ENCODE measurements at regions of chr5 and their contacts with region 1.

Region 1: DNA sequence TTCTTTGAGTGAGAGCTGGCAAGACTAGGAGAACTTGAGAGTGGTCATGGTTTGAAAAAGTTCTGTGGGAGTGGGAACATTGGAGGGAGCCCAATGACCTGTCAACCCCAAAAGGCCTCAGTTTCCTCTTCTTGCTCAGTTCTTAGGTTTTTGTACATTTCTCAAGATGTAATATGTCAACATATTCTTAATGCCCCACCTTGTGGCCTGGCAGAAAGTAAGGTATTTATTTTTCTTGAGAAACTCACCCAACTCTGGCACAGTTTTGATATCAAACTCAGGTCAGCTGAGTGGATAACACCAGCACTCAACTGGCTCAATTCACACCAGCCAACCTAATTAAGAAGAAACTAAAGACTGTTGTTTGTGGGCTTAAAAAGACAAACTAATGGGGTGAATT is 123.0 kb upstream of the SLC27A6 start:
- DNase-seq: no peak
- H3K4me3 ChIP-seq: no peak overlapping the region
- H3K27ac ChIP-seq: no peak overlapping the region
- H3K4me1 ChIP-seq: no peaks in the 10 kb centered on the region
- H3K27me3 ChIP-seq: no peaks in the 10 kb centered on the region
- CTCF ChIP-seq: no peak
- EP300 ChIP-seq: no peak
- POLR2A ChIP-seq: no peak

Region 2: GRCh38 chr5:128213340-128213739 is 628.9 kb before region 1 on chr5:
- intact Hi-C with region 1: loop called (anchors 2 kb)
- DNase-seq: no peak
- H3K4me3 ChIP-seq: no peak overlapping the region
- H3K27ac ChIP-seq: no peak overlapping the region
- H3K4me1 ChIP-seq: no peaks in the 10 kb centered on the region
- H3K27me3 ChIP-seq: no peaks in the 10 kb centered on the region
- CTCF ChIP-seq: peak; percentile 44 to 67 (median 52)
- EP300 ChIP-seq: no peak
- POLR2A ChIP-seq: no peak